Esophagus squamous epithelium (tissue), 5 donors: ENCODE measurements at regions of chr9 and their contacts with region 1.

Region 1: DNA sequence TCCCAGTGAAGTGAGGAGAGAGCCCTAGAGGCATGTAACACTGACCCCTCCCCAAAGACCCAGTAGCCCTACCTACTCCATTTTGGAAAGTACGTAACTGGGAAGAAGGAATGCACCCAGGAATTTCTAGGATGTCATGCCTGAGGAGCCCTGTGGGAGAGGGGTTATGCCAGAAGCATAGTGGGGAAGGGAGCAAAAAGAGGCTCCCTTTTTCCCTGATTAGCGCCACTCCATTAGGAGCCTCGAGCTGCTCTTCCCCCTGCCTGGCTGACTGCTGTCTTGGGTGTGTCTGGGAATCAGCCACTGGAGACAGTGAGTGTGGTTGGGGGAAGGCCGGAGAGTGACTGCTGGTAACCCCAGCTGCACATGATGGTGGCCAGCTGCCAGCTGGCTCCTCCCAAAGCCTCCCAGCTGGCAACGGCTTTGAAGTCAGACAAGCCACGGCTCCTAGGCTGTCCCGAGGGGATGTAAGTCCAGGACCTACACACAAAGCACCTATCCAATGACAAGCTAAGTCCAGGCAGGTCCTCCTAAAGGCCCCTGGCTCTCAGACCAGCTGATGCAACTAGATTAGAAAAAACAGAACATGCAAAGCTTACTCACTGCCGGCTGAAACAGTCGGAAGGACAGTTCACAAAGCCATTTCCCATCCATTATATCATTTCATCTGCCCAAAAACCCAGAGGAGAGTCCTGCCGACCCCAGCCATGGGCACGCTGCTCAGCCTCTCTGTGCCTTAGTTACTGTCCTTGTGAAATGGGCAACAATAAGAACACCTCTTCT is 136.6 kb upstream of the ABCA1 start:
- DNase-seq: peak; percentile 10
- H3K4me3 ChIP-seq: peak overlapping the region in 1 of 4 donors; percentile 38
- H3K27ac ChIP-seq: peak overlapping the region; percentile 86 to 89 (median 88)
- H3K4me1 ChIP-seq: peaks cover 24 to 37% (median 35%) of the 10 kb centered on the region in 3 donors
- H3K27me3 ChIP-seq: no peaks in the 10 kb centered on the region
- CTCF ChIP-seq: no peak
- POLR2A ChIP-seq: peak in 1 of 4 donors; percentile 35

Region 2: DNA sequence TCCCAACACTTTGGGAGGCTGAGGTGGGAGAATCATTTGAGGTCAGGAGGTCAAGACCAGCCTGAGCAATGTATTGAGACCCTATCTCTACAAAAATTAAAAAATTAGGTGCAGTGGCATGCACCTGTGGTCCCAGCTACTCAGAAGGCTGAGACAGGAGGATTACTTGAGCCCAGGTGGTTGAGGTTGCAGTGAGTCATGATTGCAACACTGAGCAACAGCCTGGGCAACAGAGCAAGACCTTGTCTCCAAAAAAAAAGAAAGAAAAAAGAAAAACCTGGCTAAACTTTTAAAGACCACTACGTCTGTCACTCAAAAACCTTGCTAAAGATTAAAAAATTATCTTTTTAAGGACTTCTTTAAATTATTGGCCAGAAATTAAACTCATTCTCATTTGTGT is 76.8 kb before region 1 on chr9:
- intact Hi-C with region 1: loop called (anchors 10 kb)
- DNase-seq: no peak
- H3K4me3 ChIP-seq: no peak overlapping the region
- H3K27ac ChIP-seq: no peak overlapping the region
- H3K4me1 ChIP-seq: peaks cover 20 to 38% (median 20%) of the 10 kb centered on the region in 3 donors
- H3K27me3 ChIP-seq: no peaks in the 10 kb centered on the region
- CTCF ChIP-seq: no peak
- POLR2A ChIP-seq: no peak

Region 3: DNA sequence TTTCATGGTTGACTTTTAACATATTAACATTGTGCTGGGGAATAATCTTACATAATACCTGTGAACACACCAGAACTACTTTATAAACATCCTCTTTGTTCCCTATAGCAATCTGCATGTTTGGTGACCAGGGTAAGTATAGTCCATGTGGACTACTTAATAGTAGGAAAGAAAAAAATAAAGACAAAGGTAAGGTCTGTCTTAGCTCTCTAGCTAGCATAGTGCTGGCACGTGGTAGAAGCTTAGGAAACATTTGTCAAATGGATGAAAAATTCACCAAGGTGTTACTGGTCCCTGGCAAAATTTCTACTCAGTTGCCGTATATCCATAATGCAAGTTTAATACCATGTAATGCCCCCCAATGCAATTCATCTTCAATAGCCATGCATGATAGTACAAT is 58.0 kb before region 1 on chr9:
- intact Hi-C with region 1: no loop called
- DNase-seq: no peak
- H3K4me3 ChIP-seq: no peak overlapping the region
- H3K27ac ChIP-seq: peak overlapping the region in 2 of 4 donors; percentile 45 to 66
- H3K4me1 ChIP-seq: peaks cover 0 to 20% (median 13%) of the 10 kb centered on the region in 3 donors
- H3K27me3 ChIP-seq: no peaks in the 10 kb centered on the region
- CTCF ChIP-seq: no peak
- POLR2A ChIP-seq: no peak

Region 4: DNA sequence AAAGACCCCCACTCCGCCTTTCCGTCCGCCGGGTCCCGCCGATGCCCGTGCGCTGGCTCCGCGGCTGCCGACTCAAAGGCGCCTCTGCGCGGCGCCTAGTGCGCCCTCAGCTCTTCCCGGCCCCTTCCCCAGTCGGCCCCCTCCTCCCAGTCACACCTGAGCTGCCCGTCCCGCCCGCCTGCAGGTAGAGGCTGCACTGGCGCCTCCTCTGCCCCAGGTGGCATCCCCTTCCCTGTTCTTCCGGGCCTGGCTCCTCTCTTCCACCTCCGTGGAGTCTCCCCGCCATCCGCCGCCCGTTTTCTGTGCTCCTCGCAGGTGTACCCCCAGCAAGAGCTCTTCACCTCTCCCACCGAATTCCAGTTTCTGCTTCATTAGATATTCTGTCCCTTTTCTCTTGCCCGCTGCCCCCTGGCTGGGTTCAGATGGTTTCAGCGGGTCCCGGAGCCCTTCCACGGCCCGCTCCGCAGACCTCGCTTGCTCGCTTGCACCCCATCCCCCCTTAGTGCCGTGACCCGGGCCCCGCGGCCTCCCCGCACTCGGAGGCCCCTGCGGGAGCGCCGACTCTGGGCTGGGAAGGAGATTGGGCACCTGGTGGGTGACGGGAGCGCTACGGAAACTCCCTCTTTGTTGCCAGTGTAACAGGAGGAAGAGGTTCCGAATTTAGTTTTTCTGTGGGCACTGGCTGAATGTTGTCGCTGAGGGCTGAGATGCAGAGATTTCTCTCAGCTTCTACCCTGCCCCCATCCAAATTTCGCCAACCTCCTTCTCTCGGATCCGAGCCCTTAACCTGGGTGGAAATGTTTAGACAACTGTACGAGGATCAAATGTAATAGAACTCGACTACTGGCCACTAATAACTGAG is 180.8 kb after region 1 on chr9:
- intact Hi-C with region 1: no loop called
- DNase-seq: no peak
- H3K4me3 ChIP-seq: peak overlapping the region; percentile 82 to 96 (median 88)
- H3K27ac ChIP-seq: peak overlapping the region; percentile 88 to 95 (median 91)
- H3K4me1 ChIP-seq: peaks cover 3 to 51% (median 3%) of the 10 kb centered on the region in 3 donors
- H3K27me3 ChIP-seq: no peaks in the 10 kb centered on the region
- CTCF ChIP-seq: peak in 5 of 6 experiments; percentile 22 to 57 (median 30)
- POLR2A ChIP-seq: peak in 1 of 4 donors; percentile 20

Region 5: GRCh38 chr9:105475302-105475701 is 410.8 kb after region 1 on chr9:
- intact Hi-C with region 1: no loop called
- DNase-seq: no peak
- H3K4me3 ChIP-seq: no peak overlapping the region
- H3K27ac ChIP-seq: no peak overlapping the region
- H3K4me1 ChIP-seq: no peaks in the 10 kb centered on the region
- H3K27me3 ChIP-seq: no peaks in the 10 kb centered on the region
- CTCF ChIP-seq: peak in 2 of 6 experiments; percentile 10 to 12
- POLR2A ChIP-seq: no peak